Activated B cell treated with CpG ODN at 0.5 μM for 24 hours (primary cell): ENCODE measurements at regions of chr10 and their contacts with region 1.

Region 1: DNA sequence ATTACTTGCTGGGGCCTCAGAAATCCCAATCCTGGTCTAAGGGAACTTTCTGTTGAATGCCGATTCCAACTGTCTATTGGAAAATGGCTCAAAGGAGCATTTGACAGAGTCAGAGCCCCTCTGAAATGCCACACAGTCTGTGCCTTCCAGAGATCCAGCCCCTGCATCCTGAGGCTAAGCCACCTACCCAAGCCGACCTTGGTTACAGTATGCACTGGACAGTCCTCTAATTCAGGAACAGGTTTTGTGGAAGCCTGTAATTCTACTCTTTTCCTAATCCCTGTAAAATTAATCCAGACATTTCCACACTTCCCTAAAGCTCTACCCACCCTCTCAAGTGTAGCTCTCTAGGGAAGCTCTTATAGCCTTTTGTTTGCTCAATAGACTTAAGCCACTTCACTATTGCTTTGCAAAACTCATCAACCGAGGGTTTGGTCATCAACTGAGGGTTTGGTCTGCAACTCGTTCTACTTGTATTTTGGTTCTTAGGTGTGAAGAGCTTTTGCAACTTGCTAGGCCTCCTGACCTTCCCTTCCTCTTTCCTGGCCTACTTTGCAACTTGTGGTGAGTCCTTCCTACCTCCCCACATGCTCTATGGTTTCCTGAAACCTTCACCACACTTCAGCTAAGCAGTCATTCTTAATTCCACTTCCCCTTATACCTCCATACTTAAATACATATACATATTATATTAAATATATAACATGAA is 364.8 kb downstream of the SFMBT2 start:
- DNase-seq: no peak
- ATAC-seq: peak; percentile 37
- H3K4me3 Mint-ChIP-seq: no peak overlapping the region
- H3K27ac Mint-ChIP-seq: no peak overlapping the region
- H3K4me1 Mint-ChIP-seq: peaks cover 25% of the 10 kb centered on the region
- H3K27me3 Mint-ChIP-seq: peaks cover 2% of the 10 kb centered on the region
- CTCF ChIP-seq: no peak

Region 2: GRCh38 chr10:6563075-6563474 is 483.0 kb before region 1 on chr10:
- CTCF ChIA-PET with region 1: no interaction called
- POLR2A ChIA-PET with region 1: no interaction called
- intact Hi-C with region 1: no loop called
- DNase-seq: no peak
- ATAC-seq: no peak
- H3K4me3 Mint-ChIP-seq: no peak overlapping the region
- H3K27ac Mint-ChIP-seq: no peak overlapping the region
- H3K4me1 Mint-ChIP-seq: no peaks in the 10 kb centered on the region
- H3K27me3 Mint-ChIP-seq: peaks cover 33% of the 10 kb centered on the region
- CTCF ChIP-seq: no peak

Region 3: GRCh38 chr10:6863381-6863780 is 182.7 kb before region 1 on chr10:
- CTCF ChIA-PET with region 1: no interaction called
- POLR2A ChIA-PET with region 1: no interaction called
- intact Hi-C with region 1: no loop called
- DNase-seq: no peak
- ATAC-seq: no peak
- H3K4me3 Mint-ChIP-seq: no peak overlapping the region
- H3K27ac Mint-ChIP-seq: no peak overlapping the region
- H3K4me1 Mint-ChIP-seq: no peaks in the 10 kb centered on the region
- H3K27me3 Mint-ChIP-seq: peaks cover 10% of the 10 kb centered on the region
- CTCF ChIP-seq: no peak

Region 4: DNA sequence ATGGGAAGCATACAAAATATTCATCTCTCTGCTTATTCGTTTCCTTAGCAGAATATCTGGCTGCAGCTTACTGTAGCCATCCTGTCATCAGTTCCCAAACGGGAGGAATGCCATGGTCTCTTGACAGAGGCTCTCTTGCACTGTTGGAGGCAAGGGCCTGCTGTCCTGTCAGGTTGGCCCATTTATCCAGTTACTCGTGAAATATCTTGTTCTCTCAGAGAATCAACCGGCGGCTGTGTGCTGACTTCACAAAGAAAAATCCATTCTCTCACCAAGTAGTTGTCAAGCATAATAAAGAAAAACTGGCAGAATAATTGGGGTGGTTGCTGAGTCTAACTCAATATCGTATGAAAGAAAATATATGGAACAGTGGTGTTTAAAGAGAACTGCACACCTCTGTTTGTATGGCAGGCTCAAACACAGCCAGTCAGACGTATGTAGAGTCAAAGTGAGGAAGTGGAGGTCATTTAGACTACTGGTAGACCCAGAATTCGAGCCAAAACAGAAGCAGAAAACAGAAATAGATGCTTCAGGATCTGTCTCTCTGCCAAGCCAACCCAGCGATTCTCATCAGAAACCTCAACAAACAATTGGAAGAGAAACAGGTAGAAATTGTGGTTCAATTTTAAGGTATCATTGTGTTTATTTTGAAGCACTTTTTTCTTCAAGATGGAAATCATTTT is 116.8 kb before region 1 on chr10:
- CTCF ChIA-PET with region 1: no interaction called
- POLR2A ChIA-PET with region 1: no interaction called
- intact Hi-C with region 1: loop called (anchors 5 kb)
- DNase-seq: no peak
- ATAC-seq: no peak
- H3K4me3 Mint-ChIP-seq: no peak overlapping the region
- H3K27ac Mint-ChIP-seq: no peak overlapping the region
- H3K4me1 Mint-ChIP-seq: peaks cover 47% of the 10 kb centered on the region
- H3K27me3 Mint-ChIP-seq: no peaks in the 10 kb centered on the region
- CTCF ChIP-seq: no peak

Region 5: DNA sequence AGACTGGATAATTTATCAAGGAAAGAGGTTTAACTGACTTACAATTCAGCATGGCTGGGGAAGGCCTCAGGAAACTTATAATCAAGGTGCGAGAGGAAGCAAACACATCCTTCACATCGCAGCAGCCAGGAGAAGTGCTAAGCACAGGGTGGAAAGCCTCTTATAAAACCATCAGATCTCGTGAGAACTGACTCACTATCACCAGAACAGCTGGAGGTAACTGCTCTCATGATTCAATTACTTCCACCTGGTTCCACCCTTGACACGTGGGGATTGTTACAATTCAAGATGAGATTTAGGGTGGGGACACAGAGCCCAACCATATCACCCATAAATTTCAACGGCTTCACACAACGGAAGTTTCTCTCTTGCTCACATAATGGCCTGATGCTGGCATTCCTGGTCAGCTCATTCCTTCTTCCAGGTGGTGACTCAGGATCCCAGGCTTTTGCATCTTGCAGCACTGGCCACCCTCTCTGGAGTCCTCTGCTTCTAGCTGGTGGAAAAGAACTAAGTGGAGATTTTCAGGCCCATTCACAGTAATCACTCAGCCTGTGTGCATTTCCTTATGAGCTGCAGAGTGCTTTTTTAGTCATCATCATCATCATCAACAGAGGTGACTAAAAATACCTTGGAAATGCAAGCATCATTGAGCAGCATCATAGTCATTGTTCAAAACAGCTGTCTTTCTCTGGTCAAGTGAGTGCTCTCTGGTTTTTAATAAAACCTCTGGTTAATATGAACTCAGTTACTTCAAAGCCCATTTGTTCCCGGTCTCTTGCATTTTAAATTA is 56.7 kb after region 1 on chr10:
- CTCF ChIA-PET with region 1: no interaction called
- POLR2A ChIA-PET with region 1: no interaction called
- intact Hi-C with region 1: no loop called
- DNase-seq: no peak
- ATAC-seq: no peak
- H3K4me3 Mint-ChIP-seq: no peak overlapping the region
- H3K27ac Mint-ChIP-seq: no peak overlapping the region
- H3K4me1 Mint-ChIP-seq: no peaks in the 10 kb centered on the region
- H3K27me3 Mint-ChIP-seq: peaks cover 7% of the 10 kb centered on the region
- CTCF ChIP-seq: no peak

Region 6: DNA sequence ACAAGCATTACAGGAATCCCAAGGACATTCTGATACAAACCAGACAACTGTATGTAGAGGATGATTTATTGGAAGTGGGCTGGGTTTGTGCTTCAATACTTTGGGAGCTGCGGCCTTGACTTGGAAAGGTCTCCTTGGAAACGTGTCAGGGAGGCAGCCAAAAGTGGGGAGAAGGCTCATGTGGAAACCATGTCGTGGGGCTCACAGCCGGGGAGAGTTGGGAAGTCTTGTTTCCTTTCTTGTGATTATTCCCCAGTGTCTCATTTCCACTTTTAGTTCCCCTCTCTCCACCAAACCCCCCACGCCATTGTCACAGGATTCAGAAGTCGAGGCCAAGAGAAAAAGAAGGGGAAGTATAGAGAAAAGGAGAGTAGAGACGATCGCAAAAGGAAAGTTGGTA is 418.6 kb after region 1 on chr10:
- CTCF ChIA-PET with region 1: no interaction called
- POLR2A ChIA-PET with region 1: no interaction called
- intact Hi-C with region 1: no loop called
- DNase-seq: no peak
- ATAC-seq: no peak
- H3K4me3 Mint-ChIP-seq: no peak overlapping the region
- H3K27ac Mint-ChIP-seq: no peak overlapping the region
- H3K4me1 Mint-ChIP-seq: peaks cover 16% of the 10 kb centered on the region
- H3K27me3 Mint-ChIP-seq: no peaks in the 10 kb centered on the region
- CTCF ChIP-seq: no peak